Activated CD4-positive, alpha-beta T cell treated with anti-CD3 and anti-CD28 coated beads for 36 hours (primary cell): ENCODE measurements at regions of chr13 and their contacts with region 1.

Region 1: DNA sequence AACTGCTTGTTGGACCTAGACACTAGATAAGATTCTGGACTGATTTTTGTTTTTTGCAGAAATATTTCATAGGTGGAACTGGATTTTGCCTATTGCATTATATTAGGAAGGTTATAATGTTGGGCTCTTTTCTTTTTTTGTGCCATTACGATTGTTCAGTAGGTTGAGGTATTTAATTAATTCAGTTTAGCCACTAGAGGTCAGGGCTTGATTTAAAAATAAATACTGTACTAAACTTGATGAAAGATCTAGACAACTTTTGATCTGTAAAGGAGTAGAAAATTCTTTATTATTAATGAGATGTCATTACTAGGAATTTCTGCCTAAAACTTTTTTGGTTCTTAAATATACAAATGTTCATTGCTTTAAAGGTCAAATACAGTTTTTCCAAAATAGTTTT is 15.2 kb upstream of the SUPT20H start:
- DNase-seq: no peak
- ATAC-seq: no peak
- H3K4me3 Mint-ChIP-seq: no peak overlapping the region
- H3K27ac Mint-ChIP-seq: no peak overlapping the region
- H3K4me1 Mint-ChIP-seq: no peaks in the 10 kb centered on the region
- H3K27me3 Mint-ChIP-seq: no peaks in the 10 kb centered on the region

Region 2: GRCh38 chr13:37453246-37453645 is 378.5 kb after region 1 on chr13:
- CTCF ChIA-PET with region 1: no interaction called
- POLR2A ChIA-PET with region 1: no interaction called
- intact Hi-C with region 1: no loop called
- DNase-seq: no peak
- ATAC-seq: no peak
- H3K4me3 Mint-ChIP-seq: no peak overlapping the region
- H3K27ac Mint-ChIP-seq: no peak overlapping the region
- H3K4me1 Mint-ChIP-seq: no peaks in the 10 kb centered on the region
- H3K27me3 Mint-ChIP-seq: no peaks in the 10 kb centered on the region

Region 3: GRCh38 chr13:37602747-37603381 is 528.2 kb after region 1 on chr13:
- CTCF ChIA-PET with region 1: no interaction called
- POLR2A ChIA-PET with region 1: no interaction called
- intact Hi-C with region 1: loop called in 1 of 2 experiments (anchors 10 kb)
- DNase-seq: no peak
- ATAC-seq: no peak
- H3K4me3 Mint-ChIP-seq: no peak overlapping the region
- H3K27ac Mint-ChIP-seq: no peak overlapping the region
- H3K4me1 Mint-ChIP-seq: no peaks in the 10 kb centered on the region
- H3K27me3 Mint-ChIP-seq: no peaks in the 10 kb centered on the region

Region 4: DNA sequence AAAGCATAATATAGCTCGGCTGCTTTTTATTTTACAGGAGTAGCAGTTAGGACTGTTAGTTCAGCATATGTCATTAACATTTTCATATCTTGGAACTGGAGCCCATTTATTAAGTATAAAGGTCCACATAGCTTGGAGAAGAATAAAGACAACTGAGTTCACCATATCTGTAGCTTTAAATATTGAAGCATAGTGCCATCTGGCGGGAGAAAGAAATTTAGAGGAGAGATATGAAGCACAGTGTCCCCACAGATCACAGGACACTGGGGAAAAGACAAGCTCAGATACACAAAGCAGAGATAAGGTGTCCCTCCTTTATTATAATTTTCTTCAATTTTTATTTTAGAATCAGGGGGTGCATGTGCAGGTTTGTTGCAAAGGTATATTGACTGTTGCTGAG is 1507.4 kb after region 1 on chr13:
- CTCF ChIA-PET with region 1: no interaction called
- POLR2A ChIA-PET with region 1: no interaction called
- intact Hi-C with region 1: loop called in 1 of 2 experiments (anchors 10 kb)
- DNase-seq: no peak
- ATAC-seq: peak; percentile 39
- H3K4me3 Mint-ChIP-seq: no peak overlapping the region
- H3K27ac Mint-ChIP-seq: no peak overlapping the region
- H3K4me1 Mint-ChIP-seq: no peaks in the 10 kb centered on the region
- H3K27me3 Mint-ChIP-seq: no peaks in the 10 kb centered on the region

Region 5: GRCh38 chr13:38872693-38873092 is 1798.0 kb after region 1 on chr13:
- CTCF ChIA-PET with region 1: no interaction called
- POLR2A ChIA-PET with region 1: no interaction called
- intact Hi-C with region 1: loop called in 1 of 2 experiments (anchors 2 kb)
- DNase-seq: peak; percentile 68
- ATAC-seq: peak; percentile 33
- H3K4me3 Mint-ChIP-seq: no peak overlapping the region
- H3K27ac Mint-ChIP-seq: no peak overlapping the region
- H3K4me1 Mint-ChIP-seq: no peaks in the 10 kb centered on the region
- H3K27me3 Mint-ChIP-seq: peaks cover 17% of the 10 kb centered on the region

Region 6: GRCh38 chr13:38914070-38914469 is 1839.4 kb after region 1 on chr13:
- CTCF ChIA-PET with region 1: no interaction called
- POLR2A ChIA-PET with region 1: no interaction called
- intact Hi-C with region 1: loop called in 1 of 2 experiments (anchors 5 kb)
- DNase-seq: no peak
- ATAC-seq: no peak
- H3K4me3 Mint-ChIP-seq: no peak overlapping the region
- H3K27ac Mint-ChIP-seq: no peak overlapping the region
- H3K4me1 Mint-ChIP-seq: no peaks in the 10 kb centered on the region
- H3K27me3 Mint-ChIP-seq: peaks cover 13% of the 10 kb centered on the region